HEK293 (cell line): ENCODE measurements at regions of chr10 and their contacts with region 1.

Region 1: GRCh38 chr10:70404036-70404786 is at the start of gene EIF4EBP2:
- H3K4me3 ChIP-seq: peak within 1 kb of the TSS; percentile 76
- H3K27ac ChIP-seq: peak within 1 kb of the TSS; percentile 66
- H3K4me1 ChIP-seq: peaks cover 6% of the 10 kb centered on the region; the same call in 1 of the 2 replicates
- CTCF ChIP-seq: no peak

Region 2: DNA sequence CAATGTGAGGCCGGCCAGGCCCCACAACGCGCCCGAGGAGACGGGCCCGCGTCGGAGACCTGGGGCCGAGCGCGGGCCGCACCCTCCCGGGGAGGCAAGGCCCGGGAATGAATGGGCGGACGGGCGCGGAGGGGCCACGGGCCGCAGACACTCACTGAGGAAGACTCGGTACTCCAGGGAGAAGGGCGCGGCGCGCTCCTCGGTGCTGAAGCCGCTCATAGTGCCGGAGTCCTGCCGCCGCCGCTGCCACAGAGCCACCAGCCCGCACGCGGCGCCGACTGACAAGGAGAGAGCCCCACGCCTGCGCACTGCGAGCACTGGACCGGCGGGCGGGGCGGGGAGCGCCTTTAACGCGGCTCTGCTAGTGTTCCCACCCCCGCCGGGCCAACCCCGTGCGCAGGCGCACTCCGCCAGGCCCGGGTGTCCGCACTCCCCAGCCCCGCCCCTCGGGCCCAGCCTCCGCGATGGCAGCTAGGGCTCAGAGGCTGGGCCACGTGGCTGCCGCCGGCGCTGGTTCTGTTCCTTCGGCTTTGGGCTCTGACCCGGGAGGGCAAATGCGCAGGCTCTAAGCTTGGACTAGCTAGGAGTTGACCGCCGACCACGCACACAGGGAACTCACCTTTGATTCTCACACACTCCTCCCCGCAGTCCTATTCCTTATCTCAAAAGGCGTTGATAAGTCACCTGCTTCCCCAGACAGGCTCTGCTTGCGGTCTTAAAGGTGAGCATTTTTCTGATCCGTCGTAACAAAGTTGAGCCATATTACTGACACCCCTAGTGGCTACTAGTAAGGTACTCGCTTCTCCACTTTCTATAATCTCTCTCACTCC is 170.9 kb before region 1 on chr10 and contains the start of gene PPA1:
- CTCF ChIA-PET with region 1: no interaction called
- POLR2A ChIA-PET with region 1: interaction called, 20 read pairs
- H3K4me3 ChIP-seq: peak within 1 kb of the TSS; percentile 87
- H3K27ac ChIP-seq: peak within 1 kb of the TSS; percentile 87
- H3K4me1 ChIP-seq: no peaks in the 10 kb centered on the region
- CTCF ChIP-seq: peak; percentile 14; the same call in 1 of the 2 replicates

Region 3: DNA sequence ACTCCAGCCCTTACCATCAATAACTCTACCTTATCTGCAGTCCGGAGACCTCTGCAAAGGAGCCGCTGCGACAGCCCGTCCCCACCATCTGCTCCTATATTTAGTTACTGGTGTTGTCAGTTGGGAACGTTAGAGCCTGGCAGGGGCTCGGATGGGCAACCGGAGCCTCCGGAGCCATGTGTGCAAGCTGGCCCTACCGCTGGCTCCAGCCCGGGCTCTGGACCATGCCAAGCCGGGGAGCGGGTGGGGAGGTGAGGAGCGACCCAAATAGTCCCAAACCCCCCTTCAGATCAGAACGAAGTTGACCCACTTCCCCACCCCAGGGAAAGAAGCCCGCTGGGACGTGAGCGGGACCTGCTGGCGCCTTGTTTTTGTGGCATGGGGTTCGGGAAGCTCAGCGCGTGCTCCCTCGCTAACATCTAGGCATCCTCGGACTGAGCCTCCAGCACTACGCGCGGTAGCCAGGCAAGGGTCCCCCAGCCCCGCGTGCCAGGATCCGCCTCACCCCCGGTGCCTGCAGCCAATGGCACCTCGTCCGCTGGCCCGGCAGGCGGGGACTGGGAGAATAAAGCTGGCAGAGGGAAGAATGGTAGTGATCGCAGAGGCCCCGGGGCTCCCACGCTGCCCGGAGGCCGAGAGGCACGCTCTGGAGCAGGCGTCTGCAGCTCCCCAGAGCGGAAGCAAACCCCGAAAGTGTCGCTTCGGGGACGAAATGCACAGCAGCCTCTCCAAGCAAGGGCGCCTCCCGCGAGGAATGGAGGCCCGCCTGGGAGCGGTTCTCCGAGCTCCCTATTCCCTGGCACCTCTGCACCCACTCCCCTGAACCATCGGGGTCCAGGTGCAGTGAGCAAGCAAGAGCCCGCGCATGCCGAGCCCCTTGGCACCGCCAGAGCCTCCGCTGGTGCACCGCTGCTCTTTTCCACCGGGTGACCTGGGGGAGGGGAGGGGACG is 22.5 kb before region 1 on chr10:
- CTCF ChIA-PET with region 1: interaction called, 17 read pairs
- POLR2A ChIA-PET with region 1: interaction called, 8 read pairs
- H3K4me3 ChIP-seq: peak overlapping the region; percentile 57
- H3K27ac ChIP-seq: peak overlapping the region; percentile 46; the same call in 1 of the 2 replicates
- H3K4me1 ChIP-seq: peaks cover 3% of the 10 kb centered on the region; the same call in 1 of the 2 replicates
- CTCF ChIP-seq: no peak

Region 4: GRCh38 chr10:70391654-70392053 is 12.6 kb before region 1 on chr10:
- CTCF ChIA-PET with region 1: interaction called, 17 read pairs
- POLR2A ChIA-PET with region 1: interaction called, 11 read pairs
- H3K4me3 ChIP-seq: no peak overlapping the region
- H3K27ac ChIP-seq: no peak overlapping the region
- H3K4me1 ChIP-seq: no peaks in the 10 kb centered on the region
- CTCF ChIP-seq: no peak

Region 5: GRCh38 chr10:70418229-70418628 is 14.0 kb after region 1 on chr10:
- CTCF ChIA-PET with region 1: interaction called, 5 read pairs
- POLR2A ChIA-PET with region 1: interaction called, 10 read pairs
- H3K4me3 ChIP-seq: no peak overlapping the region
- H3K27ac ChIP-seq: no peak overlapping the region
- H3K4me1 ChIP-seq: 0 out of 2 replicates have a peak, but pooled peaks cover 2% of the 10 kb centered on the region
- CTCF ChIP-seq: no peak

Region 6: DNA sequence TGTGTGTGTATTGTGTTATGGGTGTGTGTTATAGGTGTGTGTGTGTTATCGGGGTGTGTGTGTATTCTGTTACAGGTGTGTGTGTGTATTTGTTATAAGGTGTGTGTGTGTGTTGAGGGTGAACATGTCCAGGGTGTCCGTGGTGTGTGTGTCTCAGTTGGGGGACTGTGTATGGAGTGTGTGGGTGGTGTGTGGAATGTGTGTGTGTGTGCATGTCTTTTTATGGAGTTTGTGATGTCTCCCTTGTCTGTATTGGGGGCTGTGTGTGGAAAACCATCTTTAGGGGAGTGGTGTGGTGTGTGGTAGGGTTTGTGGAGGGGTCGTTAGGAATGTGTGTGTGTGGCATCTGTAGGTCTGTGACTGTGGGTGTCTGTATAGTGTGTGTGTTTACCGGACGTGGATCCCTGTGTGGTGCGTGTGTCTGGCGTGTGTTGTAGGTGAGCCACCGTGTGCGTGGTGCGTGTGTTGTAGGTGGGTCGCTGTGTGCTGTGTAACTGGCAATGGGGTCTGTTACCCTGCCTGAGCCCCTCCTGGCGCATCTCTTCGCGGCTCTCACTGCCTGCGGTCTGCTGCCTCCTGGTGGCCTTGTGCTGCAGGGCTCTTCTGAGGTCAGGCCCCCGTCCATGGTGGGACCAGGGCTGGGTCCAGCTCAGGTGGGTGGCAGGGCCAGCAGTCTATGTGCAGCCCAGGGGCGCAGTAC is 136.0 kb after region 1 on chr10:
- CTCF ChIA-PET with region 1: no interaction called
- POLR2A ChIA-PET with region 1: no interaction called
- H3K4me3 ChIP-seq: no peak overlapping the region
- H3K27ac ChIP-seq: no peak overlapping the region
- H3K4me1 ChIP-seq: no peaks in the 10 kb centered on the region
- CTCF ChIP-seq: peak; percentile 53

Region 7: GRCh38 chr10:70693619-70694335 is 289.6 kb after region 1 on chr10:
- CTCF ChIA-PET with region 1: no interaction called
- POLR2A ChIA-PET with region 1: no interaction called
- H3K4me3 ChIP-seq: no peak overlapping the region
- H3K27ac ChIP-seq: no peak overlapping the region
- H3K4me1 ChIP-seq: no peaks in the 10 kb centered on the region
- CTCF ChIP-seq: no peak